ENCODE measurements at regions of chr1 and their contacts with region 1.

Region 1: DNA sequence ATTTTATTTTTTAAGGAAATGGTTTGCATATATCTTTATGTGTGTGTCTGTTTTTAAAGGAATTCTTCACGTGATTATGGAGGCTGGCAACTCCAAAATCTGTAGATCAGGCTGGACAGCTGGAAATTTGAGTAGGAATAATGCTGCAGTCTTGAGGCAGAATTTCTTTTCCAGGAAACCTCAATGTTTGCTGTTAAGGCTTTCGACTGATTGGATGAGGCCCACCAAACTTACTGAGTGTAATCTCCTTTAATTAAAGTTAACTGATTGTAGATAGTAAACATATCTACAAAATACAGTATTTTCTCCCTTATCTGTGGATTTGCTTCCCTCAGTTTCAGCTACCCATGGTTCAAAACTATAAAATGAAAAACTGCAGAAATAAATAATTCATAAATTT is 883.1 kb downstream of the TTLL7 start:
- DNase-seq: no peak
- ATAC-seq: no peak
- H3K4me3 ChIP-seq: no peak overlapping the region
- H3K27ac ChIP-seq: no peak overlapping the region
- H3K4me1 ChIP-seq: no peaks in the 10 kb centered on the region
- H3K27me3 ChIP-seq: no peaks in the 10 kb centered on the region
- CTCF ChIP-seq: no peak

Region 2: DNA sequence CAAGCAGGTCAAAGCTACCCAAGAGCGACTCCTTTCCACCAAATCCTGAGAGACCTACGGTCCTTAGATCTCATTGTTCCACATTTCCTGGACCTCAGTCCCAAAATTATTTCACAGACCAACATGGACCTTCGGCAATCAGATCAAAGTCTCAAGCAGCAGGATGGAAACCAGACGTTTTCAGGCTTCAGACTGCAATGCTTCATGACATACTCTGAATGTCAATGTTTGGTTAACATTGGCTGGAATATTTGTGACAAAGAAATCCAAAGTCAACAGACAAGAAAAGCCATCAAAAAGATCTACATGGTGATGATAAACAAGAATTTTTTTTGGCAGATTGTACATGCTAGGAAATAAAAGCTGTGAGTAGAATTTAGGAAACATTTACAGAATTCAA is 257.8 kb before region 1 on chr1:
- intact Hi-C with region 1: no loop called
- DNase-seq: no peak
- ATAC-seq: no peak
- H3K4me3 ChIP-seq: no peak overlapping the region
- H3K27ac ChIP-seq: no peak overlapping the region
- H3K4me1 ChIP-seq: no peaks in the 10 kb centered on the region
- H3K27me3 ChIP-seq: no peaks in the 10 kb centered on the region
- CTCF ChIP-seq: no peak

Region 3: DNA sequence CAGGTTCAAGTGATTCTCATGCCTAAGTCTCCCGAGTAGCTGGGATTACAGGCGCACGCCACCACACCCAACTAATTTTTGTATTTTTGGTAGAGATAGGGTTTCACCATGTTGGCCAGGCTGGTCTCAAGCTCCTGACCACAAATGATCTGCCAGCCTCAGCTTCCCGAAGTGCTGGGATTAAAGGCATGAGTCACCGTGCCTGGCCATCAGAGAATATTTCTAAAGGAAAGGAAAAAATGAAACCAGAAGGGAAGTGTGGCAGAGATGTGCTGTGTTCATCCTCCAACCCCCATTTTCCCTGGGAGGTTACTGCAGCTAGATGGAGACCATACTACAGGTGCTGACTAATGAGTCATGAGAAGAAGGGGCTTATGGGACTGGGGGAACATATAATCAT is 80.9 kb before region 1 on chr1:
- intact Hi-C with region 1: no loop called
- DNase-seq: no peak
- ATAC-seq: no peak
- H3K4me3 ChIP-seq: no peak overlapping the region
- H3K27ac ChIP-seq: no peak overlapping the region
- H3K4me1 ChIP-seq: no peaks in the 10 kb centered on the region
- H3K27me3 ChIP-seq: no peaks in the 10 kb centered on the region
- CTCF ChIP-seq: no peak

Region 4: GRCh38 chr1:83097715-83098114 is 18.1 kb before region 1 on chr1:
- intact Hi-C with region 1: loop called in 1 of 2 experiments (anchors 1 kb)
- DNase-seq: no peak
- ATAC-seq: no peak
- H3K4me3 ChIP-seq: no peak overlapping the region
- H3K27ac ChIP-seq: no peak overlapping the region
- H3K4me1 ChIP-seq: peaks cover 6% of the 10 kb centered on the region
- H3K27me3 ChIP-seq: no peaks in the 10 kb centered on the region
- CTCF ChIP-seq: no peak

Region 5: DNA sequence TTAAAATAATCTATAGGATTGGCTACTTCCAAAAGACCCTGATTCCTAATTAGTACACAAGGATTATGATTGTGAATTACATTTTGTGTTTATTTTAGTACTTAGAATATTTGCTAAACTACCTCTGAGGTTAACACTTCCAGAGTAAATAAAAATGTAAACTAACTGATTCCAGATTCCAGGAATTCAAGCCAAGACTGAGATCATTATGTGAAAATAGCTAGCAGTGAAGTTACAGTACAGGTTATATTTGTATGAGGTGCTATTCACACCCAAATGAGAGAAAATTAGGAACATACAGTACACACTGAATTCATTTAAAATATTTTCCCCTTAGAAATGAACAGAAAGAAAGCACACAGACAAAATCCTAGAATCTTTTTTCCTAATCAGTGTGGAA is 854.3 kb after region 1 on chr1:
- intact Hi-C with region 1: no loop called
- DNase-seq: no peak
- ATAC-seq: no peak
- H3K4me3 ChIP-seq: no peak overlapping the region
- H3K27ac ChIP-seq: no peak overlapping the region
- H3K4me1 ChIP-seq: peaks cover 5% of the 10 kb centered on the region
- H3K27me3 ChIP-seq: no peaks in the 10 kb centered on the region
- CTCF ChIP-seq: no peak